Psoas muscle (tissue), 8 donors: ENCODE measurements at regions of chr11 and their contacts with region 1.

Region 1: DNA sequence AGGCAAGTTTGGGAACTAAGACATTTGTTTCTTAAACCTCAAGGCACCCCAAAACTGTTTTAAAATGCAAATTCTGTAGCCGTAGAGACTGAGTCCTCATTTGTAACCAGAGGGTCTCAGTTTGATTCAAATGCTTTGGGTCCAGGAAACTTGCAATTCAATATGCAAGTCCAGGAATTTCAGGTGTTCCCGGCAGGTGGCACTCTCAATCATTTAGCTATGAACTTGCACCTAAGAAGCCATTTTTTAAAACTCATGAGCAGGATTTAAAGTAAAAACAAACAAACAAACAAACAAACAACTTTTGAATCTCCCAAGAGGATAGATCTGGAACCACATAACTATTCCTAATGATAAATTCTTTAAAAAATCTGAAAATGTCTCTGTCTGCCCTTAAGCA is 8.7 kb upstream of the ABTB2 start:
- DNase-seq: no peak
- ATAC-seq: no peak
- H3K4me3 ChIP-seq: no peak overlapping the region
- H3K27ac ChIP-seq: no peak overlapping the region
- H3K4me1 ChIP-seq: no peaks in the 10 kb centered on the region
- H3K27me3 ChIP-seq: no peaks in the 10 kb centered on the region
- CTCF ChIP-seq: peak; percentile 27

Region 2: GRCh38 chr11:34468209-34468841 is 101.8 kb after region 1 on chr11:
- intact Hi-C with region 1: loop called (anchors 5 kb)
- DNase-seq: no peak
- ATAC-seq: peak in 3 of 4 donors; percentile 64 to 84 (median 75)
- H3K4me3 ChIP-seq: no peak overlapping the region
- H3K27ac ChIP-seq: no peak overlapping the region
- H3K4me1 ChIP-seq: no peaks in the 10 kb centered on the region
- H3K27me3 ChIP-seq: no peaks in the 10 kb centered on the region
- CTCF ChIP-seq: peak; percentile 59

Region 3: GRCh38 chr11:34473606-34474169 is 107.2 kb after region 1 on chr11:
- intact Hi-C with region 1: loop called (anchors 5 kb)
- DNase-seq: no peak
- ATAC-seq: no peak
- H3K4me3 ChIP-seq: no peak overlapping the region
- H3K27ac ChIP-seq: peak overlapping the region; percentile 68
- H3K4me1 ChIP-seq: peaks cover 13% of the 10 kb centered on the region
- H3K27me3 ChIP-seq: no peaks in the 10 kb centered on the region
- CTCF ChIP-seq: no peak

Region 4: DNA sequence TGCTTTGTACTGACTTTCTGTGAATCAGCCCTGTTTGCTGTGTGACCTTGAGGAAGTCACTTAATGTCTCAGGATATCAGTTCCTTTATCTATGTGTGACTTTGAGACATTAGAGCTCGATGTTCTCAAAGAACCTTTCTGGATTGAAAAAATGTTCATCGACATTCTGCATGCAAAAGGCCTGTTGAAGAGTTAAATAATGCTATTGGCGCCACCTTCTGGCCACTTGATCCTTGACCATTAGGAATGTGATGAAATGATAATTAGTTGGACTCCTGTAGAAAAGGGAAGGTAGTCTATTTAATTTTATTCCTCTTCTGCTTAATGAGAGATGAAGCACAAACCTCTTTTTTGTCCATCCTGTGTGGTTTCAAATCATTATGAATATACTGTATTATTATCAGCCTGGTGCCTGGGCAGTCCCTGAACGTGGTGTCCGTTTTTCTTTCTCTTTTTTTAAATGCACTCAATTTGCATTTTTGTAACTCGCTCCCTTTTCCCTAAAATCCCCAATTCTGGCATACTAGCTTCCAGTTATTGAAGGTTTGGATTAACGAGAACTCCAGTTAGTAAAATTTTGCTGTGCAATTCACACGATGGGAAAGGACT is 126.4 kb after region 1 on chr11:
- intact Hi-C with region 1: loop called in 1 of 2 experiments (anchors 5 kb)
- DNase-seq: peak in 1 of 2 donors; percentile 37
- ATAC-seq: peak in 2 of 4 donors; percentile 64 to 80
- H3K4me3 ChIP-seq: no peak overlapping the region
- H3K27ac ChIP-seq: no peak overlapping the region
- H3K4me1 ChIP-seq: no peaks in the 10 kb centered on the region
- H3K27me3 ChIP-seq: no peaks in the 10 kb centered on the region
- CTCF ChIP-seq: peak; percentile 71